Ovary (tissue), 10 donors: ENCODE measurements at regions of chr16 and their contacts with region 1.

Region 1: GRCh38 chr16:96935-97381 is 18.9 kb downstream of the MPG start:
- DNase-seq: peak; percentile 77 to 91 (median 83)
- H3K4me3 ChIP-seq: no peak overlapping the region
- H3K27ac ChIP-seq: no peak overlapping the region
- H3K4me1 ChIP-seq: peaks cover 13% of the 10 kb centered on the region
- H3K27me3 ChIP-seq: no peaks in the 10 kb centered on the region
- CTCF ChIP-seq: peak; percentile 85 to 99 (median 98)
- EP300 ChIP-seq: no peak
- POLR2A ChIP-seq: peak; percentile 43

Region 2: DNA sequence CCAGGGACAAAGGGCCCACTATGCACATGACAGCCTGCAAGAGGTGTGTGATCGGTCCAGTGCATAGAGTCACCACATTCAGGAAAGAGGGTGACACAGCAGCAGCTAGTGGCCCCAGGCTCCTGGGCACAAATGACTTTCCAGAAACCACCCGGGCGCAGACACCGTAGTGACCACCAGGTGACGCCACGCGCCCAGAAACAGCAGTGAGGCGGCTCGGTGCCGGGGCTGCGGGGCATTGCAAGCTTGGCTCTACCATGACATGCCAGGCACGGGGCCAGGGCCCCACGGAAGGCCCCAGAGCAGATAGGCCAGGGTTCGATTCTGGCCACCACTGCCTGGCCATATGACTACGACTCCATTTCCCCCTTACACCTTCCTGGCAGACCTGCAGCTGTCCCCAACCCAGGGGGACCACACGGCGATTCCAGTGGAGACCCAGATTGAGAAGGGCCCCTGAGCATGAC is 31.3 kb before region 1 on chr16:
- intact Hi-C with region 1: loop called (anchors 1 to 2 kb)
- DNase-seq: peak; percentile 79 to 90 (median 88)
- H3K4me3 ChIP-seq: no peak overlapping the region
- H3K27ac ChIP-seq: no peak overlapping the region
- H3K4me1 ChIP-seq: peaks cover 12% of the 10 kb centered on the region
- H3K27me3 ChIP-seq: no peaks in the 10 kb centered on the region
- CTCF ChIP-seq: peak; percentile 88 to 98 (median 98)
- EP300 ChIP-seq: no peak
- POLR2A ChIP-seq: peak; percentile 36